ENCODE measurements at regions of chr19 and their contacts with region 1.

Region 1: GRCh38 chr19:49640113-49640898 is at the start of gene RRAS:
- DNase-seq: peak; percentile 100
- H3K4me3 Mint-ChIP-seq: peak within 1 kb of the TSS; percentile 84
- H3K27ac Mint-ChIP-seq: peak within 1 kb of the TSS; percentile 100
- H3K4me1 Mint-ChIP-seq: peaks cover 44% of the 10 kb centered on the region
- H3K27me3 Mint-ChIP-seq: no peaks in the 10 kb centered on the region
- CTCF ChIP-seq: no peak
- total RNA-seq, gene RRAS: 37.6 and 56.5 TPM in 2 replicates

Region 2: GRCh38 chr19:49451430-49452181 is 188.7 kb before region 1 on chr19 and contains the start of gene PIH1D1:
- CTCF ChIA-PET with region 1: no interaction called
- POLR2A ChIA-PET with region 1: interaction called, 12 read pairs
- intact Hi-C with region 1: no loop called
- DNase-seq: peak; percentile 100
- H3K4me3 Mint-ChIP-seq: peak within 1 kb of the TSS; percentile 96
- H3K27ac Mint-ChIP-seq: peak within 1 kb of the TSS; percentile 100
- H3K4me1 Mint-ChIP-seq: peaks cover 16% of the 10 kb centered on the region
- H3K27me3 Mint-ChIP-seq: no peaks in the 10 kb centered on the region
- CTCF ChIP-seq: no peak
- total RNA-seq, gene PIH1D1: 86.3 and 116 TPM in 2 replicates

Region 3: GRCh38 chr19:49536921-49537462 is 103.3 kb before region 1 on chr19:
- CTCF ChIA-PET with region 1: no interaction called
- POLR2A ChIA-PET with region 1: no interaction called
- intact Hi-C with region 1: no loop called
- DNase-seq: no peak
- H3K4me3 Mint-ChIP-seq: no peak overlapping the region
- H3K27ac Mint-ChIP-seq: no peak overlapping the region
- H3K4me1 Mint-ChIP-seq: peaks cover 6% of the 10 kb centered on the region
- H3K27me3 Mint-ChIP-seq: peaks cover 11% of the 10 kb centered on the region
- CTCF ChIP-seq: no peak

Region 4: GRCh38 chr19:49580264-49581006 is 59.9 kb before region 1 on chr19 and contains the start of gene NOSIP:
- CTCF ChIA-PET with region 1: no interaction called
- POLR2A ChIA-PET with region 1: interaction called, 112 read pairs
- intact Hi-C with region 1: loop called (anchors 2 kb)
- DNase-seq: peak; percentile 98
- H3K4me3 Mint-ChIP-seq: peak within 1 kb of the TSS; percentile 92
- H3K27ac Mint-ChIP-seq: peak within 1 kb of the TSS; percentile 96
- H3K4me1 Mint-ChIP-seq: peaks cover 22% of the 10 kb centered on the region
- H3K27me3 Mint-ChIP-seq: no peaks in the 10 kb centered on the region
- CTCF ChIP-seq: no peak
- total RNA-seq, gene NOSIP: 54.4 and 57.9 TPM in 2 replicates

Region 5: DNA sequence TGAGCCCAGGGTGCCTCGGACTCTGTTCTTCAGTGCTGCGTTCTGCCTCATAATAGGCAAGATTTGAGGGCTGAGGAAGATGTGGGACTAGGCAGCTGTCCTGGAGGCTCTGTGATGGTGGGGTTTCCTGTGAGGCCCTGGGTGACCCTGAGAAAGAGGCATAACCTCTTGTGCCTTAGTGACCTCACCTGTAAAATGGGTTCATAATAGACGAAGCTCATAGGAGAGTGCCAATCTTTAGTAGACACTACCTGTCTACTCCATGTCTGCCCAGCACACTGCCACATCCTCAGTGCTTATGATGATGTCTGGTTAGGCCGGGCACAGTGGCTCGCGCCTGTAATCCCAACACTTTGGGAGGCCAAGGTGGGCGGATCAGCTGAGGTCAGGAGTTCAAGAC is 23.8 kb before region 1 on chr19:
- CTCF ChIA-PET with region 1: interaction called, 3 read pairs
- POLR2A ChIA-PET with region 1: interaction called, 10 read pairs
- intact Hi-C with region 1: no loop called
- DNase-seq: no peak
- H3K4me3 Mint-ChIP-seq: no peak overlapping the region
- H3K27ac Mint-ChIP-seq: no peak overlapping the region
- H3K4me1 Mint-ChIP-seq: peaks cover 22% of the 10 kb centered on the region
- H3K27me3 Mint-ChIP-seq: no peaks in the 10 kb centered on the region
- CTCF ChIP-seq: no peak

Region 6: DNA sequence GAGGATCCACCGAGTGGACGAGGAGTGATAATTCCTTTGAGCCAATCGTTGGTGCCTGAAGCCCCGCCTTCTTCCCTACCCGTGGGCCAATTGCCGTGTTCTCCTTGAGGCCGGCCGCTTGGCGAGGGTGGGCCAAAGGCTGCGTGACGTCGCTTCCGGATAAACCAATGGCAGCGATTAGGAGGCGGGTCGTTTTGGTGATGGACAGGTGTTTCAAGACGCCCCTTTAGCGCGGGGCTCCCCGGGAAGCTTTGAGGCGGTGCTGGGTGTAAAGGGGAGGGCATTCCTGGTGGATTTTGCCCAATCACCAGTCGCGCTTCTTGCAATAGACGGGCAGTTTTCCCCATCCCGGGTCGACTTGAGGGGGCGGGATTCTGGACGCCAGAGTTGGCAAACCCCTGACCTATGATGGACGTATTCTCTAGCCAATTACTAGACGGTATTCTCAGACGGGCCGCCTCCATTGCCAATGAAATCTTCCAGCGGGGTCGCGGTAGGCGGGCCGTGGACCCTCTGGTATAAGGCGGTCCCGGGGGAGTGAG is 36.5 kb after region 1 on chr19:
- CTCF ChIA-PET with region 1: interaction called, 19 read pairs
- POLR2A ChIA-PET with region 1: interaction called, 121 read pairs
- intact Hi-C with region 1: loop called (anchors 1 kb)
- DNase-seq: peak; percentile 100
- H3K4me3 Mint-ChIP-seq: peak overlapping the region; percentile 96
- H3K27ac Mint-ChIP-seq: peak overlapping the region; percentile 99
- H3K4me1 Mint-ChIP-seq: peaks cover 20% of the 10 kb centered on the region
- H3K27me3 Mint-ChIP-seq: no peaks in the 10 kb centered on the region
- CTCF ChIP-seq: no peak

Region 7: DNA sequence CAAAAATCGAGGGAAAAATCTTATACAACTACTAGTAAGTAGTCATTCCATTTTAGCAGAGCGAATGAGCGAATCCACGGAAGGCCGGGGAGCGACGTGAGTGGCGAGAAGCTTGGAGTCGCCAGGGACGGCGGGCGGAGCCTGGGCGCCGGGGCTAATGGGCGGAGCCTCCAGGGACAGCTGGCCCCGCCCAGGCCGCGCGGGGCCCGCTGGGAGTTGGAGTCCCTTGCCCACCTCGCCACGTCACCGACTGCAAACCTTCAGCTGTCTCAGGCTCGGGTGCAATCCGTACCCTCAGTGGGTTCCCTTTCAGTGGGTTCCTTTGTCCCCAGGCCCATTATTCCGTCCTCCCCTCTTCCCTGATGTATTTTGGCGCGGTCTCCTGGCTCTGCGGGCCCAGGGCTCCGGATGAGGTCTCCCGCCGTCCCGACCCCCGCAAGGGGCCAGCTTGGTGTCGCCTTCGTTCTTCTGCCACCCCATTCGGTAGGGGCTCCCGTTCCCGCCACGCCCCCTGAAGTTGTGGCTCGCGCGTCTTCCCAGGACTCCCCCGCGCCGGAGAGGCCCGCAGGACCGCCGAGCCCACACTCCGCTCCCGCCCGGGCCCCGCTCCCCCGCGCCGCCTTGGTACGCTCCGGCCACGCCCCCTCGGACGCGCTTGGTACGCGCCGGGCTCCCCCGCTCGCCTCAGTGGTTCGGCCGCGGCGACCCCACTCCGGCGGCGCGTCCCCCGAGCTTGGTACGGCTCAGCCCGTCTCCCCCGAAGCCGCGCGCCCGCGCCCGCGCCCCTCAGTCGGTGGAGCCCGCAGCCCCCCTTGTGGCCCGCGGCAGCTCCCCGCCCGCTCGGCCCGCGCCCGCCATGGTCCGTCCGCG is 210.4 kb after region 1 on chr19 and contains the start of gene PTOV1:
- CTCF ChIA-PET with region 1: no interaction called
- POLR2A ChIA-PET with region 1: interaction called, 13 read pairs
- intact Hi-C with region 1: no loop called
- DNase-seq: peak; percentile 93
- H3K4me3 Mint-ChIP-seq: peak within 1 kb of the TSS; percentile 84
- H3K27ac Mint-ChIP-seq: peak within 1 kb of the TSS; percentile 89
- H3K4me1 Mint-ChIP-seq: peaks cover 32% of the 10 kb centered on the region
- H3K27me3 Mint-ChIP-seq: no peaks in the 10 kb centered on the region
- CTCF ChIP-seq: no peak
- total RNA-seq, gene PTOV1: 68.5 and 78.8 TPM in 2 replicates

Region 8: DNA sequence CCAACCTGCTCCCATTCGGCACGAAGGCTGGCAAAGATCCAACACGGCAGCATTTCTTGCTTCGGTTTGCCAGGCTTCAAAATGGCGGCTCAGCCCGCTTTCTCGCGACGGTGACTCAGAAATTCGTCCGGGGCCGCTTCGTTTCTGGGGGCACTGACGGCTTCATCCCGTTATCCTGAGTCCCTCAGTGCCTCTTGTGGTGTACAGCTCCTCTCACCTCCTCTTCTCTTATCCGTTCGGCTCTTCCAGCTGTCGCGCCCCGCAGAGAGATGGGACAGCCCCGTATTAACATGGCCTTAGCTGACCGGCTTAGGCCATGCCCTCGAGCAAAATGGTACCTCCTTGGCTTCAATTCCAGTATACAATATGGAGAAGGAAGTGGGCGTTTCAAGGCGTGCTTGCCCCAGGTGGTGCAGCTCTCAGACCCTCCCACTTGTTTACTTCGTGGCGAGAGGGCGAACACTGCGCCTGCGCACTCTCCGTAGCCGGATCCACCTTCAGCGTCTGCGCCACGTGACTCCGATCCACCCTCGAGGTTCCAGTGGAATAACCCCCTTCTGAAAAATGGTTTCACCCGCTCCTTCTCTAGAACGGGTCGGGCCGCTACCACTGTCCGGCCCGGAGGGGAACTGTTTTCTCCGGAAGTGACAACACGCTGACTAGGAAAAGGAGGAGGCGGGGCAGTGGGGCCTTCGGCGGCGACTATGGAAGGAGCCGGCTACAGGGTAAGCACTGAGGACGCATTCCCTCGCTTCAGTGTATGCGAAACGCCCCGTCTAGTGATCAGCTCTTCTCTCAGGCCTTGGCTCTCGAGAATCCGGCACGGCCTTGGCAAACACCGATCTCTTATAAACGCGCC is 236.9 kb after region 1 on chr19 and contains the starts of genes AKT1S1 and TBC1D17:
- CTCF ChIA-PET with region 1: no interaction called
- POLR2A ChIA-PET with region 1: interaction called, 29 read pairs
- intact Hi-C with region 1: no loop called
- DNase-seq: peak; percentile 100
- H3K4me3 Mint-ChIP-seq: no peak within 1 kb of the TSS
- H3K27ac Mint-ChIP-seq: no peak within 1 kb of the TSS
- H3K4me1 Mint-ChIP-seq: peaks cover 10% of the 10 kb centered on the region
- H3K27me3 Mint-ChIP-seq: no peaks in the 10 kb centered on the region
- CTCF ChIP-seq: no peak
- total RNA-seq, gene AKT1S1: 74.7 and 79.2 TPM in 2 replicates
- total RNA-seq, gene TBC1D17: 25.2 and 25.5 TPM in 2 replicates

Measured in MCF 10A (cell line).